Right ventricle myocardium inferior (tissue), 1 donor: ENCODE measurements at regions of chr2 and their contacts with region 1.

Region 1: DNA sequence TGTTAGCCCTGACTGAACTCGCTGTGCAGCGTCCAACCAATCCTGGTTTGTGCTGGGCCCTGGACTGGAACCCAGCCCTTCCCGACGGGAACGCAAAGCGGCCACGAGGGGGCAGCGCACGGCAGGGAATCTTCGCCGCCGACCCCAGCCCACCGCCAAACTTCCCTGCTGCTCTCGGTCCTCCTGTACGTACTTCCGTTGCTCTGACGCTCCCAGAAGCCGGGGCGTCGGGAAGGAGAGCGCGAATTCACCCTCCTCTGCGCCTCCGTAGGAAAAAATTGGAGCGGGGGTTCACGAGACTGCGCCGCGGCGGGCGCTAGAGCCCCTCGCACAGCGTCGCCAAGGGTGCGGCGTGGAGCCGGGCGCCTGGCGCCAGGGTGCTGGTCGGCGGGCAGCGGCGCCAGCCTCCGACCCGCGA is 948 bp upstream of the SH3RF3 start:
- DNase-seq: peak; percentile 89
- ATAC-seq: peak; percentile 87

Region 2: DNA sequence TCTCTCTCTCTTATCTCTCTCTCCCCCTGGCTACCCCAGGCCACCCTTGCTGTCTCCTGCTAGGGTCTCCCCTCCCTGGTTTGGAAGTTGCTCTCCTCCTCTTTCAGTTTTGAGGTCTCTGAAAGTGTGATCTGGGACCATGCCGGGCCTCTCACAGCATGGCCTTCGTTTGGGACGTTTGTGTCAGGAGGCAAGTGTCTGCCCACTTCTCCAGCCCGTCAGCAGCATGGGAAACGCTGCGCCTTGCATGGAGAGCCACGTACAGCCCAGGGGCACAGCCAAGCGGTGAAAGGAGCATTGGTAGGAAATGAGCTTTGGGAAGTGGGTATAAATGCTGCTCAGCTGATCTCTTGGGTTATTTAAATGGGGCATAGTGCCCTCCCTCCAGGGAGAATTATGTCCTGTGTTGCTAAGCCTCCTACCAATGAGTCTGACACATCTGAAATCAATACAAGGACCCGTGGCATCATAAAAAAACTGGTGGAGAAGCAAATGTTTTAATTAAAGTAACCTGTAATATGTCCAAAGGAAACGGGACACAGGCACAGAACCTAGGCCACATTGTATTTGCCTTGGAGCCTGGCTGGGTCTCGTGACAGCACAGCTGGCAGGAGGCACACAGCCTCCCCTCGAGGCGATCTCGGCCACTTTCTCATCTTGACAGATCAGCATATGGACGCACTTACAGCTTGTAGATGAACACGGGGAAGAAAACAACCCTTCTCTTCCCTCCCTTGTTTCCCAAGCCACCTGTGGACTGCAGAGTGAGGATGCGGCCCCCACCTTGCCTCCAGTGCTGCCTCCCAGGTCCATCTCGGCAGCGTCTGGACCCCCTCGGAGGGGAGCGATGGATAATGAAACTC is 73.6 kb after region 1 on chr2:
- intact Hi-C with region 1: loop called (anchors 2 kb)
- DNase-seq: no peak
- ATAC-seq: peak; percentile 62

Region 3: GRCh38 chr2:109230941-109231420 is 102.9 kb after region 1 on chr2:
- intact Hi-C with region 1: no loop called
- DNase-seq: no peak
- ATAC-seq: peak; percentile 77

Region 4: GRCh38 chr2:109284826-109285225 is 156.8 kb after region 1 on chr2:
- intact Hi-C with region 1: loop called (anchors 5 kb)
- DNase-seq: peak; percentile 81
- ATAC-seq: peak; percentile 87

Region 5: DNA sequence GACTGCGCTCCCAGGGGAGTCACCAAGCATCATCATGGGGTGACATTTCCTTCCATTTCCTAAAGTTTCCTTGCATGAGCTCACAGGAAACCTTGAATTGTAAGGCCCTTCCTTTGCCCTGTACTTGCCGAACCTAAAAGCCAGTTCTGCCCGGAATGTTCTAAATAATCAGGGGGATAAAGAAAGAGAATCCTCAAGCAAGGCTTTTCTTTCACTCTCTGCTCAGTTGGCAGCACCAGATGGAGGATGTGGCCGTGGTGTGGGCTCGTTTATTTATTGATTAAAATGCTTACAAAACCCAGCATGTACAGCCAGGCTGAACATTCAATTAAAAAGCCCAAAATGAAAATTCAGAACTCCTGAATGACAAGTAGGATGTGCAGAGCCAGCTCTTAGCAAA is 171.5 kb after region 1 on chr2:
- intact Hi-C with region 1: no loop called
- DNase-seq: no peak
- ATAC-seq: no peak

Region 6: DNA sequence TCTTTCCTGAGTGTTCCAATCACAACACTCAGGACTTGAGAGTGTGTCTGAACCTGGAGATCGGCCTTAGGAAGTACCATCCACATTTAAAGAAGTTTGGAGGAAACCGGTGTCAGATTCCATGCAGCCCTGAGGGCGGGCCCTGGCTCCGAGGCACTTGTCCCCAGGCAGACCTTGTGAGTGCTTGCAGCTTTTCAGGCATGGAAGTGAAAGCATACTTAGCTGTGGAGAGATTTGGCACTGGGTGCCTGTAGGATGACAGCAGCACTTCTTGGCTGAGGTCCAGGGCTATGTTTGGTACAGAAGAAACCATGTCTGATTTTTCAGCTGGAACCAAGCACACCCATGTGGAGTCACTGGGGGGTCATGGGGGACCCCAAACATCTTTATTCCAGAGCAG is 254.9 kb after region 1 on chr2:
- intact Hi-C with region 1: loop called (anchors 5 kb)
- DNase-seq: peak; percentile 77
- ATAC-seq: peak; percentile 92